Posterior vena cava (tissue), 2 donors: ENCODE measurements at regions of chr3 and their contacts with region 1.

Region 1: GRCh38 chr3:107938143-107938542 is 152.7 kb downstream of the CD47 start:
- DNase-seq: no peak

Region 2: DNA sequence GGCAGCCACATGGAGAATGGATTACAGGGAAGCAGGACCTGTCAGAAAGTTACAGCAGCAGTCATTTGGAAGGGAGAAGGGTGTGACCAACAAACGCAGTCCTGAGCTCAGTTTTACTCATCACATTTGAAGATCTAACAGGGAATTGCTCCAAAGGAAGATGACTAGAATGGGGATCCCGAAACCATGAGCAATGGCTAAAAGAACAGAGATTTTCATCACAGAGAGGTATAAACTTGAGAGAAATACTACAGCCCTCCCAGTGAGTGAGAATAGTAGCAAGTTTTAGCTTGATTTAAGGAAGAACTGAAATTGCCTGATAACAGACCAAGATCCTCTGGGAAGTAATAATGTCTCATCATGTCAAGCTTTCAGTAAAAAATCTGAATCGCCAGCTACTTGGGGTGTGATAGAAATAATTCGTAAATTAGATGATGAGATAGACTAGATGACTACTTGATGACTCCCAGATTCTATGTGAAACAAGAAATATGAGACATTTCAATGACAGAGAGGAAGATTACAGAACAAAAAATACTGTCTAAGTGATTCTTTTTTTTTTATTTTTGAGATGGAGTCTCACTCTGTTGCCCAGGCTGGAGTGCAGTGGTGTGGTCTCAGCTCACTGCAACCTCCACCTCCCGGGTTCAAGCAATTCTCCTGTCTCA is 135.8 kb after region 1 on chr3:
- intact Hi-C with region 1: loop called in 1 of 2 experiments (anchors 10 kb)
- DNase-seq: no peak

Region 3: DNA sequence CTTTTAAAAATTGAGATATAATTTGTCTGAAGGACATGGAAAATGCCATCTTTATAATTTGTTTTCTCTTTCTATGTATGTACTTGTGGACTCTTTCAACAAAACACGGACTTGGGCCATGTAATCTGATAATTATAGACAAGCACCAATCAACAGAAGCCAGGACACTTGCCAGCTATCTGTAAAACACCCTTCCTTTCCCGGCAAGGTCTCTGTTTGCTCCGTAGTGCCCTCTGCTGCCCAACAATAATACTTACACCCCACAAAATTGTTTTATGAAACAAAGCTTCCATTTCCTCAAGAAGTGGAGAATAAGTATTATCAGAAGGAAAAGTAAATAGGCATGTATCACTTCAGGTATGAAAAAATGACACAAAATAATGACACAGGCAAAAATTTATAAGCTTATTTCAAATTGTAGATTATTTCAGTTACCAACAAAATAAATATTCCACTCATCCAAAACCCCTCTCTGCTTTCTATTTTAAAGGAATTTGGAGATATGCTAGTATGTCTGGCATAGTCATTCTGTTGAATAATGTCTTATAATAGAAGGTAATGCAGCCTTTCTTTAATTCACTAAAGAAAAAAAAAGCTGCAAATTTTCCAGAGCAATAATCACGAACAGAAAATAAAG is 539.5 kb after region 1 on chr3:
- intact Hi-C with region 1: loop called in 1 of 2 experiments (anchors 10 kb)
- DNase-seq: no peak